ENCODE measurements at regions of chr1 and their contacts with region 1.

Region 1: GRCh38 chr1:110619412-110620249 is 13.5 kb upstream of the KCNA2 start:
- DNase-seq: peak; percentile 85
- CTCF ChIP-seq: peak; percentile 96

Region 2: GRCh38 chr1:110380672-110381283 is 238.9 kb before region 1 on chr1:
- in situ Hi-C with region 1: no loop called
- DNase-seq: no peak
- CTCF ChIP-seq: no peak

Region 3: GRCh38 chr1:110538075-110538474 is 81.6 kb before region 1 on chr1:
- in situ Hi-C with region 1: loop called (anchors 10 kb)
- DNase-seq: no peak
- CTCF ChIP-seq: no peak

Region 4: DNA sequence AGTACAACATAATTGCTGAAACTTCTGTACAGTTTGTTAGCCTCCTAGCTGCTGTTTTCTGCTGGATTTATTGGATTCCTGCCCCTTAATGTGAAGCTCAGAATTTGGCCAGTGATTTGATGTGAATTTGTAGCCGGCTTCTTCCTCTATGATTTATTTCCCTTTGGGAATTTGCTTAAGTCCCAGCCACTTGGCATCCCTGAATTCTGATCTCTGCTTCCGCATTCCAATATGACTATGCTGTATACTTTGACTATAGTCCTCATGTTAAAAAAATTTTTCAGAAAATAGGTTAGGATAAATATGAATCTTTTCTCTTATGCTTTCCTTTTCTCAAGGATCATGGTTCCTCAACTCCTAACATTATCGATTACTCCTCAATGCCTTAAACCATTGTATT is 356.5 kb after region 1 on chr1:
- in situ Hi-C with region 1: loop called (anchors 25 kb)
- DNase-seq: no peak
- CTCF ChIP-seq: no peak